Activated CD8-positive, alpha-beta memory T cell treated with anti-CD3 and anti-CD28 coated beads, Interleukin-2, amount 10 ng/mL, durations not matched to agents 7 days and 5 days (primary cell): ENCODE measurements at regions of chr1 and their contacts with region 1.

Region 1: GRCh38 chr1:145871994-145872924 is 13.4 kb upstream of the PIAS3 start:
- DNase-seq: peak; percentile 70
- ATAC-seq: peak; percentile 88
- H3K4me3 Mint-ChIP-seq: peak overlapping the region; percentile 73
- H3K27ac Mint-ChIP-seq: peak overlapping the region; percentile 41
- H3K4me1 Mint-ChIP-seq: peaks cover 17% of the 10 kb centered on the region
- H3K27me3 Mint-ChIP-seq: peaks cover 41% of the 10 kb centered on the region

Region 2: GRCh38 chr1:145706086-145706680 is 166.1 kb before region 1 on chr1:
- CTCF ChIA-PET with region 1: no interaction called
- DNase-seq: no peak
- ATAC-seq: no peak
- H3K4me3 Mint-ChIP-seq: no peak overlapping the region
- H3K27ac Mint-ChIP-seq: no peak overlapping the region
- H3K4me1 Mint-ChIP-seq: peaks cover 3% of the 10 kb centered on the region
- H3K27me3 Mint-ChIP-seq: peaks cover 8% of the 10 kb centered on the region

Region 3: GRCh38 chr1:145804235-145805045 is 67.8 kb before region 1 on chr1:
- CTCF ChIA-PET with region 1: no interaction called
- DNase-seq: no peak
- ATAC-seq: no peak
- H3K4me3 Mint-ChIP-seq: no peak overlapping the region
- H3K27ac Mint-ChIP-seq: no peak overlapping the region
- H3K4me1 Mint-ChIP-seq: peaks cover 7% of the 10 kb centered on the region
- H3K27me3 Mint-ChIP-seq: no peaks in the 10 kb centered on the region

Region 4: DNA sequence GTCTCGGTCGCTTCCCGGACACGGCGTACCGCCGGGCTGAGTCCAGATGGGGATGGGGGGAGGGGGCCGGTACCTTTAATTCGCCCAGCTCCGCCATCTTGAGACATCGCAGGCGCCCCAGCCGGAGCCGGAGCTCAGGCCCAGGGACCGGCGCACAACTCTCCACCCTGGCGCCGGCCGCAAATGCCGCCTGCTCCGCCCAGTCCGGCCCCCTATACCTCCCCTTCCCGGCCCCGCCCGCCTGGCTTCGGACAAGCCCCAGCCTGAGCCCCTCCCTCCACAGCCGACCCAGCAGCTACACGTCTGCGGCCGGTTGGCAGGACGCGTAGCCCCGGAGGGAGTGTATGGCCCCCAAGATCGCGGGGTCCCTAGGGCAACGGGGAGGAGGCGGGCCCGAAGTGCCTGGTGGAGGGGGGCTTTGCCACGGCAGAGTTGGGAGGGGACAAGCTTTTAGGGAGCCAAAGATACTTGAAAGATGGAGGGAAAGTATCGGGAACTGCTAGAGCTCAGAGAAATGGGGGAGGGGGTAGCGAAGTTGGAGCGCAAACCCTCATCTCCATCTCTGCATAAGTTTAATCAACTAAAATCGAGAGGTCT is 13.3 kb before region 1 on chr1 and contains the start of gene PIAS3:
- CTCF ChIA-PET with region 1: interaction called, 51 read pairs
- DNase-seq: peak; percentile 94
- ATAC-seq: peak; percentile 87
- H3K4me3 Mint-ChIP-seq: peak within 1 kb of the TSS; percentile 95
- H3K27ac Mint-ChIP-seq: peak within 1 kb of the TSS; percentile 87
- H3K4me1 Mint-ChIP-seq: peaks cover 10% of the 10 kb centered on the region
- H3K27me3 Mint-ChIP-seq: peaks cover 8% of the 10 kb centered on the region
- total RNA-seq, gene PIAS3: 20.3 to 23.6 TPM

Region 5: DNA sequence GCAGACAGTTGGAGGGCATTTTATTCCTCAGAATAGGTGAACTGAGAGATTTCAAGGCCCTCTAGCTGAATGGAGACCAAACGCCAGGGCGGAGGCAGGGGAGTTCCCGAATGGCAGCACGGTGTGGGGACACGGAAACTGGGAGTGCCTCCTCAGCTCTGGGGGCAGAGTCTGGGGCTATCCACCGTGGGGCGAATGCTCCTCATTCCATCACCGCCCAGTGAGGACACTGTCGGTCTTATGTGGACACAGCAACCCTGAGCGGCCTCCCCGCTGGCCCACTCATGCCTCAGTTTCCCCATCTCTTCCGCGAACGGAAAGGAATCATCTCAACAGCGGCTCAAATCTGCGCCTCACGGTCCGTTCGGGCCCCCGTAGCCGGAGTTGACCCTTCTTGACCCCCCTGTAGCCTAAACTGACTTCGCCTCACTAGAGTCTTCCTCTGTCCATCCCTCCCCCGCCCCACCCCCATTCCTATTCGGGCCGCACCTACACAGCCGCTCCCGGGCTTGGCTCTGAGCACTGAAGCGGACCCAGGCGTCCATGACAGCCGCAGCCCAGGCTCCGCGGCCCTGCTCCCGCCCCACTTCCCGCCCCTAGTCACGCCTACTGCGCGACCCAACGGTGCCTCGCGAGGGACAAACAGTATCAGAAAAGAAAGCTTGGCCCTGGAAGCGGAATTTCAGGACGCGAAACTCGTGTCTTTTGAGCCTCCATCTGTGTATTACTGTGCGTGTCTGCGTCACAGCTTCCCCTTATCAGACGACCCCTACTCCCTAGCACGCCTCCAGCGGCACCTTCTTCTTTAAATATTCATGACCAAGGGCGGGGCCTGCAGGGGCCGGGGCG is 46.1 kb after region 1 on chr1 and contains the start of gene PEX11B:
- CTCF ChIA-PET with region 1: no interaction called
- DNase-seq: peak; percentile 94
- ATAC-seq: peak; percentile 93
- H3K4me3 Mint-ChIP-seq: peak within 1 kb of the TSS; percentile 91
- H3K27ac Mint-ChIP-seq: peak within 1 kb of the TSS; percentile 95
- H3K4me1 Mint-ChIP-seq: peaks cover 42% of the 10 kb centered on the region
- H3K27me3 Mint-ChIP-seq: no peaks in the 10 kb centered on the region
- total RNA-seq, gene PEX11B: 27.3 to 36.2 TPM